Ascending aorta (tissue), 2 donors: ENCODE measurements at regions of chr1 and their contacts with region 1.

Region 1: DNA sequence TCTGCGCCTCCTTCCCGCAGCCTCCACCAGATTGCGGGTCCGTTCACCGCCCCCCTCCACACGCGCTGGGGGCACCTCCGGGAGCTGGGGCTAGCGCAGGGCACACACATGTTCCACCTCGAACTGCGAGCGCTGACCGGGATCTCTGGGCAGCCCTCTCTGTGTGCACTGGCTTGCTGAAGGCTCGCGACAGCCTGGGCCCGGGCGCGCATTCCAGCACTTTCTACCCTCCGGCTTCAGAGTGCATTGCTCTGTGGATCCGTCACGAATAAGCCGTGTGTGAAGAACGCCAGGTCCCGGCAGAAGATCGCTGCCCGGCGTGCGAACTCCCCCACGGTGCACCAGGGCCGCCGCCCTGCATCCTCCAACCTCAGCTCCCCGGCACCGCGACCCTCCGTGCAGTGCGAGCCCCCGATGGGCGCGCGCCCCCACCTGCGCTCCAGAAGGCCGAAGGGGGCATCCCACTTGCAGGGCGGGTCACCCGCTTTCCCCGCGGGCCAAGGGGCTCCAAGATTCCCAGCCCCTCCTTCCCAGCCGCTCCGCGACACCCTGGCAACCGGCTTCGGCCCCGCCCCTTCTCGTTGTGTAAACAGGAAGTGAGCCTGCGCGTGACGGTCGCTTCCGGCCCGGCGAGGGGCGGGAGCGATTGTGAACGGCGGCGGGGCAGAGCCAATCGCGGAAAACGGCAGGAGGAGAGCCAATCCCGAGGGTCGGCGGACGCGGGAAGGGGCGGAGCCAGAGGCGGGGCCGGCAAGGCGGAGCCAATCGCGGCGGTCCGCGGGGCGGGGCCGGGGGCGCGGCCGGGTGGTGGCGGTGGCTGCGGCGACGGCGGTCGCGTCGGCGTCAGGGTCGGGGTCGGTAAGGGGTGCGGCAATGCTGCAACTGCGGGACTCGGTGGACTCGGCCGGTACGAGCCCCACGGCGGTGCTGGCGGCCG is at the start of gene TPRG1L:
- DNase-seq: peak; percentile 88 to 99
- H3K4me3 ChIP-seq: peak within 1 kb of the TSS; percentile 67 to 97
- H3K27ac ChIP-seq: peak within 1 kb of the TSS; percentile 62 to 65
- H3K4me1 ChIP-seq: peaks cover 11 to 15% of the 10 kb centered on the region in 2 donors
- H3K27me3 ChIP-seq: no peaks in the 10 kb centered on the region
- CTCF ChIP-seq: no peak
- total RNA-seq, gene TPRG1L: 18.9 TPM

Region 2: DNA sequence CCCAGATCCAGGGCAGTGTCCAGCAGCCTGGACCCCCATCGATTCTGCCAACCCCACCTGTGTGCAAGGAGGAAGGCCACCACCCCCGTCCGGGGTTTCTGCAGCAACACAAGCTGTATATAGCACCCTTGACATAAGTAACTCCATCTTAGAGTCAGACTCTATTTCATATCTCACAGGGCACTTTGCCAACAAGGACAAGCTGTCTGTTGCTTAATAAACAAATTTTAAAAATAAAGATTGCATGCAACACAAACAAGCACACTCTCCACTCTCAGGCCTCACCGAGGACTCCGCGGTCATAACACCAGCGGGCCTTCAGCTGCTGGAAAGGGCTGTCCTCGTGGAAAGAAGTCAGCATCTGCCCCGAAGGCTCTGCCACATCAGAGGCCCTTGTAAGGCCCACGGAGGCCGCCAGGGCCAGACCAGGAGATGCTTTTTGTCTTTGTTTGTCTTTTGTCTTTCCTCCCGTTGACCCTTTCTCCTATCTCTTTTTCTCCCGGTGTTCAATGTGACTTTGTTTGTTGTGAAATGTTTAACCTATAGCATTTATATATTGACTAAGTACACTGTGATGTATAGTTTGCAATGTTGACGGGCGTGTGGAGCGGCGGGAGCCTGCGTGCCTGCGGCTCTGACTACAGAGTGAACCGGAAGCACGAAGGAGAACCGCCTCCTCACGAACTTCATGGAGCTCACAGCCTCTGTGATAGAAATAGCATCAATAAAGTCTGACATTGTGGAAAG is 37.4 kb before region 1 on chr1:
- intact Hi-C with region 1: no loop called
- DNase-seq: no peak
- H3K4me3 ChIP-seq: no peak overlapping the region
- H3K27ac ChIP-seq: no peak overlapping the region
- H3K4me1 ChIP-seq: no peaks in the 10 kb centered on the region
- H3K27me3 ChIP-seq: no peaks in the 10 kb centered on the region
- CTCF ChIP-seq: no peak

Region 3: GRCh38 chr1:3649342-3650247 is 25.1 kb after region 1 on chr1 and contains the start of gene WRAP73:
- intact Hi-C with region 1: loop called (anchors 1 kb)
- DNase-seq: peak; percentile 67 to 95
- H3K4me3 ChIP-seq: peak within 1 kb of the TSS; percentile 81 to 90
- H3K27ac ChIP-seq: no peak within 1 kb of the TSS
- H3K4me1 ChIP-seq: peaks cover 6 to 34% of the 10 kb centered on the region in 2 donors
- H3K27me3 ChIP-seq: peaks cover 27% of the 10 kb centered on the region
- CTCF ChIP-seq: peak in 2 of 3 experiments; percentile 7 to 10
- total RNA-seq, gene WRAP73: 14.4 TPM

Region 4: DNA sequence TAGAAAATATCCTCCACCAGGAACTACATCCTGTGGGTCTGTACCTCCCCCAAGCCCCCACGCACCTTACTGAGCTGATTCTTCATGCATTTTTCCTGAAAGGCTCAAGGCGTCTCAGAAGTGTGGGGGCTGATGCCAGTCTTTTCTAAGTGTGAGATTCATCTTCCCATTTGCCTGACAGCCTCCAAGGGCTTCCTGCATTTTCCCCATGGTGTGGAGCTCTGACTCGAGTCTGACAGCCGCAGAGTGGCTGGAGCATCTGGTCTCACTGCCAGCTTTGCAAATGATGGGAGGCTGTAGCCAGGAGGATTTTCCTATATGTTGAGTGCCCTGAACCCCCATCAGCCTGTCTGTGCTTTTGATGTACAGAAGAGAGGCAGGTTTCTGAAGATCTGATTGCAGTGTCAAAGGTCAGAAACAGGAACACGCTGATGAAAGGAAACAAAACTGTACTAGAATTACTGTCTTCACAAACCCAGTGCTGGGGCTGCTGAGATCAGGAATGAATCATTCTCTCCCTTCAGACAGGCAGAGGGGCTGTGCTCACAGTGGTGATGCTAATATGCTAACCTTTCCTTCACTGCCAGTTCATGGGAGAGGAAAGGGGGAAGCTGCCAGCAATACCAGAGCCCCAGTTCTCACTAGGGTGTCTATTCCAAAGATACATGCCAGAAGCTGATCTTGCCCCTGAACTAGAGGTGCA is 477.1 kb after region 1 on chr1:
- intact Hi-C with region 1: no loop called
- DNase-seq: no peak
- H3K4me3 ChIP-seq: no peak overlapping the region
- H3K27ac ChIP-seq: no peak overlapping the region
- H3K4me1 ChIP-seq: no peaks in the 10 kb centered on the region
- H3K27me3 ChIP-seq: no peaks in the 10 kb centered on the region
- CTCF ChIP-seq: no peak